ENCODE measurements at regions of chr1 and their contacts with region 1.

Region 1: DNA sequence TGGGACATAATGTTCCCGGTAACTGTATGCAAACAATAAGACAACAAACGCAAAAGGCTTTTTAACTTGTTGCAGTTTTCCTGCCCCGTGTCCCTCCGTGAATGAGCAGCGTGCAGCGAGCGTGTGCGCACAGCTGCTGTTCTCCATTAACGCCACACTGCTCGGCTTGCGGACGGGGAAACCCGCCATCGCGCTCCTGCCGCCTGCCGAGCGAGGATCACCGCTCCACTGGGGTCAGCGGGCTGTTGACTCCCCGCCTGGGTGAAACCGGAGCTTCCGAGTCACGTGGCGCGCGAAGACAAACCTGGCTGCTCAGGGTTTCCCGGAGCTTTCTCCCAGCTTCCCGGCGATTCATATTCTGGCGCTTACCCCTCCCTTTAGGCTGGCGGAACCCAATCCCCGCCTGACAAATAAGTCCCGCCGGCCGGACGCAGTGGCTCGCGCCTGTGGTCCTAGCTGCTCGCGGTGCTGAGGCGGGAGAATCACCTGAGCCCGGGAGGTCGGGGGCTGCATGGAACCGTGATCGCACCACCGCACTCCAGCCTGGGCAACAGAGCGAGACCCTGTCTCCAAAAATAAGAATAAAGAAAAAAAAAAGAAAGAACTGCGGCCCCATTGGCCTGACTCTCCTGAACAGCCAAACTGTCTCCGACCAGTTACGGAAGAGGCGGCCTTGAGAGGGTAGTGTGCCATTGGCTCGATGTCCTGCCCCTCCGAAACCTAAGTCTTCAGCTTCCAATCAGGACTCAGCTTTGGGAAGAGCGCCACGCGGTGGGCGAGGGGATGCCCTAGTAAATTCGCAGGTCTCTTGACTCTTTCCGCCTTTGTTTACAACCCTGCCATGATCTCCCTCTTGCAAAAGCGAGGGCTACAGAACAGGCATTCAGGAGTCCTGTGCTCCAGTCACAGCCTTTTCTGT is at the start of gene CREB3L4:
- DNase-seq: peak; percentile 97
- H3K4me3 ChIP-seq: peak within 1 kb of the TSS; percentile 42 to 68 (median 62)
- H3K27ac ChIP-seq: peak within 1 kb of the TSS; percentile 29
- H3K4me1 ChIP-seq: peaks cover 34% of the 10 kb centered on the region
- H3K27me3 ChIP-seq: no peaks in the 10 kb centered on the region
- CTCF ChIP-seq: peak in 1 of 2 donors; percentile 51
- POLR2A ChIP-seq: peak; percentile 73
- total RNA-seq, gene CREB3L4: 8.1 and 9.9 TPM in 2 replicates

Region 2: DNA sequence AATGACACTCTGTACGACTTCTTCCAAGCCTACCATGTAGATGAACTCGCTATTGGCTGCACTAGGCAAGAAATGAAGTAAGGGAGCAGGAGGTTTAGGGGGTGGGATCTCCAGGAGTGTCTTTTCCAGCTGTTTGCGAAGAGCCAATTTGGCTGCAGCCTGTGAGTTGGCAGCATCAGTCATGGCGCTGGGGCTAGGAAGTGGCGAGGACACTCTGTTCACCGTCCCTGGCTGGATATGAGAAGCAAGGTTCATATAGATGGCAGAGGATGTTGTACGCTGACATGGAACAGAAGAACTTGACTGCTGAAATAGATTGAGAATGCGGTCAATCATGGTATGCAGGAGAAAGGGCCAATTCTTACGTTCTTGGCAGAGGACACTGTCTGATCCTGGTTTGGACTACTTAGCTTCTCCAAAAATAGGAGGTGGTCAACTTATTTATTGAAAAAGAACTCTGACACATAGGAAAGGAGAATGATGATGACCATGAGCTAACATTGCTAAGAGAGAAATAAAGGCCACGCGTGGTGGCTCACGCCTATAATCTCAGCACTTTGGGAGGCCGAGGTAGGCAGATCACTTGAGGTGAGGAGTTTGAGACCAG is 151.0 kb before region 1 on chr1:
- CTCF ChIA-PET with region 1: interaction called, 12 read pairs
- POLR2A ChIA-PET with region 1: no interaction called
- dilution Hi-C with region 1: no loop called
- intact Hi-C with region 1: no loop called
- DNase-seq: no peak
- H3K4me3 ChIP-seq: no peak overlapping the region
- H3K27ac ChIP-seq: no peak overlapping the region
- H3K4me1 ChIP-seq: peaks cover 10% of the 10 kb centered on the region
- H3K27me3 ChIP-seq: no peaks in the 10 kb centered on the region
- CTCF ChIP-seq: no peak
- POLR2A ChIP-seq: no peak

Region 3: DNA sequence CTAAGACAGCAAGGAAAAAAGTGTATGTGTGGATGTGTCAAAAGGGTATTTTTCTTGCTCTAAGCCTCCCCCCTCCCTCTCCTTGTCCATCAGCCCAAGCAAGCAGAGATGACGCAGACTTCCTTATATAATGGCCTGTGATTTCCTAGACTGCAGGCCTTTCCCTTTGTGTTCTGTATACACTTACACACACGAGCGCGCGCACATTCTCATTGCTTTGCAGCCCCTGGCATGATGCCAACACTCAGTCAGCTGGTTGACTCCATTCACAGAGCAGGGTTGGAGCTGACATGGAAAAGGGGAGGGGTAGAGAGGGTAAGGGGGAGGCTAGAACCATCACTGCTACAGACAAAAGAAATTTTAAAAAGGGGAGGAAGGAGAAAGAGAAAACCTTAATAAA is 86.4 kb before region 1 on chr1:
- CTCF ChIA-PET with region 1: no interaction called
- POLR2A ChIA-PET with region 1: no interaction called
- dilution Hi-C with region 1: no loop called
- intact Hi-C with region 1: loop called (anchors 5 kb)
- DNase-seq: peak; percentile 99
- H3K4me3 ChIP-seq: peak overlapping the region; percentile 12 to 70 (median 32)
- H3K27ac ChIP-seq: peak overlapping the region; percentile 81
- H3K4me1 ChIP-seq: peaks cover 23% of the 10 kb centered on the region
- H3K27me3 ChIP-seq: no peaks in the 10 kb centered on the region
- CTCF ChIP-seq: no peak
- POLR2A ChIP-seq: no peak

Region 4: DNA sequence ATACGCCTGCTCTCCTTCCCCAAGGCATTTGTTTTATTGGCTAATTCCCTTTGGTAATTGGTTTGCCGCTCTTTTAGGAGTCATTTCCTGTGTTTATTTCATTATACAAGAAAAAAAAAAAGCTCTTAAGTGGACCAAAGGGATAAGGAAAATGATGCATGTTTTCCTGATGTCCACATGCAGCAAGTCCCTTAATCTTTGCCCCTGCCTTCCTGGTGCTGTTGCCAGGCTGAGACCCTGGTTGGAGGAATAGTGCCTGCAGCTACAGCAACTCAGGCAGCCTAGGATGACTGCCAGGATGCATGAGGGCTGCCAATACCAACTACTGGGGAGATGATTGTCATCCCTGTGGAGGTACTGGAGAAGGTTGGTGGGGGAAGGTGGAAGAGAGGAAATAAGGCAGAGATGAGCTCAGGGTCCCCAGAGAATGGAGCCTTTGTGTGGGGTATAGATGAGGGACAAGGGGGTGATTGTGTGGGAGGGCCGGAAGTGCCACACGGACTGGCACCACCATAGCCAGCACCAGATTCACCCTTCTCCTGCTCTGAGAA is 38.5 kb before region 1 on chr1:
- CTCF ChIA-PET with region 1: interaction called, 6 read pairs
- POLR2A ChIA-PET with region 1: no interaction called
- dilution Hi-C with region 1: no loop called
- intact Hi-C with region 1: loop called (anchors 1 kb)
- DNase-seq: peak; percentile 91
- H3K4me3 ChIP-seq: no peak overlapping the region
- H3K27ac ChIP-seq: peak overlapping the region; percentile 4
- H3K4me1 ChIP-seq: peaks cover 19% of the 10 kb centered on the region
- H3K27me3 ChIP-seq: no peaks in the 10 kb centered on the region
- CTCF ChIP-seq: no peak
- POLR2A ChIP-seq: no peak

Region 5: GRCh38 chr1:153977250-153978240 is 10.2 kb after region 1 on chr1 and contains the start of gene JTB:
- CTCF ChIA-PET with region 1: interaction called, 21 read pairs
- POLR2A ChIA-PET with region 1: interaction called, 12 read pairs
- dilution Hi-C with region 1: no loop called
- intact Hi-C with region 1: loop called (anchors 2 kb)
- DNase-seq: peak; percentile 82
- H3K4me3 ChIP-seq: peak within 1 kb of the TSS; percentile 50 to 91 (median 70)
- H3K27ac ChIP-seq: peak within 1 kb of the TSS; percentile 4
- H3K4me1 ChIP-seq: peaks cover 10% of the 10 kb centered on the region
- H3K27me3 ChIP-seq: no peaks in the 10 kb centered on the region
- CTCF ChIP-seq: no peak
- POLR2A ChIP-seq: peak; percentile 94
- total RNA-seq, gene JTB: 89.0 and 90.2 TPM in 2 replicates